HepG2 (cell line): ENCODE measurements at regions of chr7 and their contacts with region 1.

Region 1: GRCh38 chr7:26365077-26365900 is 73.6 kb downstream of the SNX10 start:
- DNase-seq: peak; percentile 65
- ATAC-seq: peak; percentile 69; the same call in 2 of the 3 replicates
- H3K4me3 ChIP-seq: no peak overlapping the region
- H3K27ac ChIP-seq: no peak overlapping the region
- H3K4me1 ChIP-seq: peaks cover 37% of the 10 kb centered on the region
- H3K27me3 ChIP-seq: no peaks in the 10 kb centered on the region
- CTCF ChIP-seq: peak; percentile 81
- EP300 ChIP-seq: no peak
- POLR2A ChIP-seq: no peak
- RAD21 ChIP-seq: peak; percentile 82

Region 2: GRCh38 chr7:25894902-25895791 is 470.1 kb before region 1 on chr7:
- CTCF ChIA-PET with region 1: interaction called, 15 read pairs
- POLR2A ChIA-PET with region 1: no interaction called
- in situ Hi-C with region 1: loop called (anchors 5 kb)
- intact Hi-C with region 1: loop called (anchors 2 kb)
- DNase-seq: no peak
- ATAC-seq: peak; percentile 76
- H3K4me3 ChIP-seq: no peak overlapping the region; a peak in 1 of 6 replicates
- H3K27ac ChIP-seq: no peak overlapping the region
- H3K4me1 ChIP-seq: peaks cover 21% of the 10 kb centered on the region
- H3K27me3 ChIP-seq: peaks cover 0 to under 1% of the 10 kb centered on the region in 2 experiments; a peak in 1 of 5 replicates
- CTCF ChIP-seq: peak; percentile 60
- EP300 ChIP-seq: no peak
- POLR2A ChIP-seq: no peak
- RAD21 ChIP-seq: 0 out of 2 replicates have a peak, but pooled peaks have one; percentile 10

Region 3: DNA sequence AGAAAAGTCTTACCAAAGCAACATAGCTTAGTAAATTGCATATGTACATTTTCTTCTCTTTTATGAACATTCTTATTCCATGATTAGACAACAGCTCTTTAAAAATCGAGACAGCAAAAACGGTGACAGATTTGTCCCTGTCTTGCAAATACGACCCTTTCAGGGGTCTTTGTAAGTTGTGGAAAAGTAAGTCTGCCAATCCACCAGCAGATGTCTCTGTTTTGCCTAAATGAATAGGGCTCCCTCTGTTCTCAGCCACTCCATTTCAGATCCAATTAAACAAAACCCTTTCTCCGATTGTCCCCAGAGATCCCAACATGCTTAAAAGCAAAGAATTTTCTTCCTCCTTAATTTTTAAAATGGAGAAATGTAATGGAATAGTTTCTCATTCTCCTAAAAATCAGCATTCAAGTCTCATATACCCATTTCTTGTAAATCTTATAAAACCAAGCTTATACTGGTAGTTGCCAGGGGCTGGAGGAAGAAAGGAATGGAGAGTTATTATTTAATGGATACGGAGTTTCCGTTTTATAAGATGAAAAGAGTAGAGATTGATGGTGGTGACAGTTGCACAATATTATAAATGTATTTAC is 274.3 kb before region 1 on chr7:
- CTCF ChIA-PET with region 1: interaction called, 9 read pairs
- POLR2A ChIA-PET with region 1: no interaction called
- in situ Hi-C with region 1: loop called (anchors 5 kb)
- intact Hi-C with region 1: loop called (anchors 1 kb)
- DNase-seq: peak; percentile 54
- ATAC-seq: peak; percentile 70
- H3K4me3 ChIP-seq: no peak overlapping the region
- H3K27ac ChIP-seq: no peak overlapping the region
- H3K4me1 ChIP-seq: peaks cover 15% of the 10 kb centered on the region
- H3K27me3 ChIP-seq: 0 out of 5 replicates have a peak, but pooled peaks cover 0 to 3% of the 10 kb centered on the region in 2 experiments
- CTCF ChIP-seq: peak; percentile 72
- EP300 ChIP-seq: no peak
- POLR2A ChIP-seq: no peak
- RAD21 ChIP-seq: peak; percentile 30; the same call in 1 of the 2 replicates

Region 4: DNA sequence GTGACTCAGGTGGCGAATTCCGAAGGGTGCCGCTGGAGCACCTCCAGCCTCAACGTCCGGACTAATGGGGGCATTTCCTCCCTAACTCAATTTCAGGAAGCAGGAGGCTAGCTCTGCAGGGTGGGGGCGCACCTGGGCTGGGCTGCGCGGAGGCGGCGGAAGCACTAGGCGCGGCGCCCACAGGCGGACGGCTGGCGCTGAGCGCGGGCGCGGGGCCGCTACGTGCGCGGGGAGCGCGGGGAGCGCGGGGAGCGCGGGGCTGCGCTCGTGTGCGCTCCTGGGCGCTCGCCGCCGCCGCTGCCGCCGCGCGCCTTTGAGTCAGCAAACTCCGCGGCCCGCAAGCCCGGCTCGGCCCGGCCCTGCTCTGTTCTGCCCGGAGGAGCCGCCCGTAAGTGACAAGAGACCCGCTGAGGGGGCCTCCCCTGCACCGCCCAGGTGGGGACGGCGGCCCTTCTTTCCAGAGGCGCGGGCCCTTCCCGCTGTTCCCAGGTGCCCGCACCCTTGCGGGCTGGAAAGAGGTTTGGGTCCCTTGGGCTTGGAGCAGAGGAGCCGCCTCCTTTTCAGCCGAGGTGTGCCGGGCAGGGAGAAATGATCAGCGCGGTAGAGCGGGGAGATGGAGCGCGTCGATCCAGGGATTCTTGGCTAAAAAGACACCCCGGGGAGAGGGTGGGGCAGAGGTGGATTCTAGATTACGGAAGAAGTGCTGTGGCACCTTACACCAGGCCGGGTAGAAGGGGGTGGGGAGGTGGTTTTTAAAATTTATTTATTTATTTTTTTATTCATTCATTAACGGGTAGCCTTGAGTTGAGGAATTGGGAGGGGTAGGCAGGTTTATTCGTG is 73.4 kb before region 1 on chr7 and contains the start of gene SNX10:
- CTCF ChIA-PET with region 1: interaction called, 10 read pairs
- POLR2A ChIA-PET with region 1: interaction called, 3 read pairs
- in situ Hi-C with region 1: loop called (anchors 5 kb)
- intact Hi-C with region 1: loop called (anchors 1 kb)
- DNase-seq: peak; percentile 59
- ATAC-seq: peak; percentile 95
- H3K4me3 ChIP-seq: peak within 1 kb of the TSS; percentile 90 to 96 (median 94)
- H3K27ac ChIP-seq: peak within 1 kb of the TSS; percentile 77
- H3K4me1 ChIP-seq: peaks cover 26% of the 10 kb centered on the region
- H3K27me3 ChIP-seq: peaks cover 0 to 3% of the 10 kb centered on the region in 2 experiments; a peak in 2 of 5 replicates
- CTCF ChIP-seq: peak; percentile 86
- EP300 ChIP-seq: no peak
- POLR2A ChIP-seq: no peak; a peak in 1 of 4 replicates
- RAD21 ChIP-seq: peak; percentile 79
- total RNA-seq, gene SNX10: 26.0 and 43.1 TPM in 2 replicates

Region 5: DNA sequence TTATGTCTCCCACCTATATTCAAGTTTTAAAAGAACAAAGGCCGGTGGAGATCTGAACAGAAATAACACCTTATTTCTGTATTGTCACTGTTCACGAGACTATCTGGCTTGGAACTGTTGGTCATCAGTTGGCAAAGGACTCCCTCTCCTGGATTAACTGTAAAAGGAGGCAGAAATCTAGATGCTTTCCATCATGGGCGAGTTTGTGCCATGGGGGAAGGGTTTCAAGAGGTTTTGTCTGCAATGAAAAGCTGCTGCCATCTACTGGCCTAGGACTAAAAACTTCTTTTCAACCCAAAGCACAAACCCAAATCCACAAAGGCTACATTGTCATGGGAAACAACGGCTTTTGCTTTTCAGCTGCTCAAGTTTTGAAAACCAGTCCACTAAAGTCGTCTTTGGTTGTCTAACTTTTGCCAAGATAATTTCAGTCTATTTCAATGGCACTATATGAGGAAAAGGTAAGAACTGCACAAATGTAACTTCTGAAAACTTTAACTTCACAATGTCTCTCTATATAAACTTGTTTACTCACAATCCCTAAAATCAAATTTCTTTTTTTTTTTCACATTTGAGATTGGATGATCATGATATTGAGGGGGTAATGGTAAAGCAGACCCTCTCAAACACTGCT is 302.3 kb after region 1 on chr7:
- CTCF ChIA-PET with region 1: interaction called, 24 read pairs
- POLR2A ChIA-PET with region 1: no interaction called
- in situ Hi-C with region 1: no loop called
- intact Hi-C with region 1: loop called (anchors 1 kb)
- DNase-seq: peak; percentile 94
- ATAC-seq: peak; percentile 92
- H3K4me3 ChIP-seq: no peak overlapping the region
- H3K27ac ChIP-seq: no peak overlapping the region
- H3K4me1 ChIP-seq: peaks cover 4% of the 10 kb centered on the region; the same call in 1 of the 2 replicates
- H3K27me3 ChIP-seq: no peaks in the 10 kb centered on the region
- CTCF ChIP-seq: peak; percentile 91
- EP300 ChIP-seq: no peak
- POLR2A ChIP-seq: no peak
- RAD21 ChIP-seq: peak; percentile 90

Region 6: DNA sequence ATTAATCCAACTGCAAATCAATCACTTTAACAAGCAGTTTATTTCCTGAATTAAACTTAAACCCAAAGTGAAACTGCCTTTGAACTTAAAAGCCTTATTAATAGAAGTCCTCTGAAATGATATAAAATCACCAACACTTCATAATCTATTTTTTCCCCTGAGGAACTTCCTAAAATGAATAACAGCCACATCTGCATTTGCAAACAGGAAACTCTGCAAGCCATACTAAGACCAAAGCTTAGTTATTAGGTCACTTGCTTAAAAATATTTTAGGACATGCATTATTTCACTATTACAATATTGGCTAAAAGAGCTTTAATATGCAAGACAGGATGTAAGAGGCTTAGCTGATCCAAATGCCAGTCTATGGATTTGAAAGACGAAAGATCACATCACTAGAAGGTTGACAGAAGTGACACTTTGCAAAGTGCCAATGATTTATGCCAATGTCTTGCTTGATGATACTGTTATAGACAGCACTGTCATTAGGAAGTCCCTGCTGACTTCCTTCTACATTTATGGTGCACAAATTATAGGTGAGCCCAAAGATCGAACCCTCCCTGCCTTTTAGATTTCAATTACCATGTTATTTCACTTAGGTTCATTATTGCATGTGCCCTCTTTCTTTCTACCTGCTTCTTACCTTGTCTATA is 599.0 kb after region 1 on chr7:
- CTCF ChIA-PET with region 1: no interaction called
- POLR2A ChIA-PET with region 1: no interaction called
- in situ Hi-C with region 1: no loop called
- intact Hi-C with region 1: no loop called
- DNase-seq: no peak
- ATAC-seq: no peak
- H3K4me3 ChIP-seq: no peak overlapping the region
- H3K27ac ChIP-seq: no peak overlapping the region
- H3K4me1 ChIP-seq: peaks cover 31% of the 10 kb centered on the region
- H3K27me3 ChIP-seq: no peaks in the 10 kb centered on the region
- CTCF ChIP-seq: no peak
- EP300 ChIP-seq: no peak
- POLR2A ChIP-seq: no peak
- RAD21 ChIP-seq: no peak